ENCODE measurements at regions of chr17 and their contacts with region 1.

Region 1: DNA sequence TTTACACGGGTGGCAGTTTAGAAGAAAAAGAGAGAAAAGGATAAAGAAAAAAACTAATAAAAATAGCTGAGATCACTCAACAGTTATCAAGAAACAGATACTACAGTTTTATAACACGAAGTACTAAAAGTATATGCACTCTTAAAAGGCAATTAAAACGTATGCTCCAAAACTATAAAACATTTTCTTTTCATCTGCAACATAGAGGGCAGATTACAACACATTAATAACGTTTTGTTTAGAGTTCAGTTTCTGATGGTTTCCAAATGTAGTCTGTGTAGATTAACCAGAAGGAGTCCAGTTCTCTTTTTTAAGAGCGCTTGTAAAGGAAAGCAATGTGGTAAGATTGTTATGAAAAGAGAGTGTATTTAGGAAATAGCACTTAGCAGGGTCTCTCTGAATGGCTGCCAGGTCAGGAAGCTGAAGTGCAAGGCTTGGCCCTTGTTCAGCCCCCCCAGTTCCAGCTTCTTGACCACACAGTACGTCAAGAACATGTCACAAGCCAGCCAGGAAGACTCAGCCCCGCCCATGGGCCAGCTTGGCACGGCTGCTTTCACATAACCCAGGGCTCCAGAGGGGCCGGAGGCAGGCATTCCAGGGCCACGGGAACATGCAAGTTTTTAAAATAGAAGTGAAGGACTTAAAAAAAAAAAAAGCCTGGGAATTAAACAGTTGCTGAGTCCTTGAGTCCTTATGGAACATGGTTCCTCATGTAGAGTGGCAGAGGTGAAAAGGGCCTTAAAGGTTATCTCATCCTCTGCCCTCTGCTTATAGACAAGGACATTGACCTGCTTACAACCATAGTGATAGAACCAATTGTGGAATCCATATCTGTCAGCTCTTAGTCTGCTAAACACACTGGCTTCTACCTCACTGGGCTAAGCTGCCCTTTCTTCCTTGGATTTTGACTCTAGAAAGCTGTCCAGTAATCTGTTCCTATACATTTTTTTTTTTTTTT is 147.4 kb upstream of the TBX2 start:
- DNase-seq: peak in 1 of 2 donors; percentile 97
- H3K4me3 ChIP-seq: no peak overlapping the region
- H3K27ac ChIP-seq: peak overlapping the region; percentile 49
- H3K4me1 ChIP-seq: peaks cover 23% of the 10 kb centered on the region
- H3K27me3 ChIP-seq: no peaks in the 10 kb centered on the region
- CTCF ChIP-seq: peak in 1 of 3 experiments; percentile 10
- POLR2A ChIP-seq: no peak

Region 2: DNA sequence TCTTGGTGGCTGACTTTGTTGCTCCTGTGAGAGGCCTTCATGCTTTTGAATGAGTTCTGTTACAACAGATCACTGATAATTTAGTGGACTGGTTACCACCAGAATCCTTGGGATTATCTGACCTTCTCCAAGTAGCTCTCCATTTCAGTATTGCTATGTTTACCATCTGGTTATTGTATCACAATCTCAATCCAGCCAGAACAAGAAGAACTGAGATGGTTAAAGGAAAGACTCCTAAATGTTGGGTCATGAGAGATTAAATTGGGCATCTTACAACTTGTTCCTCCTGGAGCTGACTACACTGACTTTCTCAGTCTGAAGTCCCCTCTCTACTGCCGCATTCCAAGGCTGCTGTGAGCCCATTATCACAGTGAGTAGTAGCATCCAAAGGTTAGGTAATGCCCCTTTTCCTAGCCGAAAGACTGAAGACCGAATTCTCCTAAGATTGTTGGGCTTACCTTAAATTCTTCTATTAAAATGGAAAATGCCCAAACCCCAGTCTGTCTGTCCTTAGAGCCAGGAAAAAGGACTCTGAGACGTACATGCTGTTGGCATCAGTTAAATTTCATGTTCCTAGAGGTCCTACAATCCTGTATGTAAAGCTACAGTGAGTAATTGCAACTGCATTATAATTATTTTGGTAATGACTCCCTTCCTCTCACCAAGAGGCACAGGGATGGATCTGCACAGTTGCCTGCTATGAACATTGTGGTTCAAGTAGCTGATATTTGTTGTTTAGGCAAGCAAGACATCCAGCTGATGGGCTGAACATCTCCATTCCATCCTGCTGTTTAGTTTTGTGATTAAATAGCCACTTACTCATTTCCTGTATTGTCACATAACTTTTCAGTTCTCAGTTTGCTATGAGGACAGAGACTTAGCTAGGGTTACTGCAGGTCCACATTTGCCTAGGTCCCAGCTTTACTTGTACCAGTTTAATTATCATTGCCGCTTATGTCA is 34.1 kb before region 1 on chr17:
- intact Hi-C with region 1: no loop called
- DNase-seq: no peak
- H3K4me3 ChIP-seq: no peak overlapping the region
- H3K27ac ChIP-seq: no peak overlapping the region
- H3K4me1 ChIP-seq: no peaks in the 10 kb centered on the region
- H3K27me3 ChIP-seq: no peaks in the 10 kb centered on the region
- CTCF ChIP-seq: no peak
- POLR2A ChIP-seq: no peak

Region 3: DNA sequence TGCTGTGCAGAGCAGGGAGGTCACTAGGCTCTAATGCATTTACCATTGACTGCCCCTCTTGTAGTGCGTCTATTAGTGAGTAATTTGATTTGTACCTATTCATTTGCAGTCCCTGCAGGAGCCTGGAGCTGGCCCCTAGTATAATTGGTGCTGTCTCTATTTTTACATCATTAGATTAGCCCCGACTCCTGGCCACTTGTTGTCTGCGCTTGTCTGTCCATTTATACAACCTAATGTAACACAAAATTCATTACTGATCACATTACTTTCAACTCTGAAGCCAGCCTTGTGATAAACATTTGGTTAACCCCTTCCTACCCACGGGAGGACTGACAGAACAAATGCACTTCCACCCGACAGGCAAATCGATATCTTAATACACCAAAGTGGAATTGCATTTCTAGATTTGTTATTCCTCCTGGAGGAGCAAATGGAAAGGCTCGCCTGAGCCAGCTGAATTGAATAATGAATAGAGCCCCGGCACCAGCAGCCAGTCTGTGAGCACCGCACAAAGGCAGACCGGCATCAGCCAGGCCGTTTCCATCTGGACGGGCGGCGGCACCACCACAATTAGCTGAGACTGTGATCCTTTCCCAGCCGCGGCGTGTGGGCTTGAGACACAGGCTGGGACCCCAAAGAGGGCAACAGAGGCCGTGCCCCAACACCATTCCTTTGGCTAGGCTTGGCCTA is 128.8 kb after region 1 on chr17:
- intact Hi-C with region 1: no loop called
- DNase-seq: no peak
- H3K4me3 ChIP-seq: no peak overlapping the region
- H3K27ac ChIP-seq: no peak overlapping the region
- H3K4me1 ChIP-seq: no peaks in the 10 kb centered on the region
- H3K27me3 ChIP-seq: no peaks in the 10 kb centered on the region
- CTCF ChIP-seq: no peak
- POLR2A ChIP-seq: no peak

Region 4: GRCh38 chr17:61399131-61400057 is 147.2 kb after region 1 on chr17 and contains the start of gene TBX2:
- intact Hi-C with region 1: loop called (anchors 5 kb)
- DNase-seq: no peak
- H3K4me3 ChIP-seq: peak within 1 kb of the TSS; percentile 49 to 87
- H3K27ac ChIP-seq: peak within 1 kb of the TSS; percentile 83
- H3K4me1 ChIP-seq: peaks cover 55% of the 10 kb centered on the region
- H3K27me3 ChIP-seq: peaks cover 12% of the 10 kb centered on the region
- CTCF ChIP-seq: no peak
- POLR2A ChIP-seq: peak in 1 of 2 donors; percentile 44
- total RNA-seq, gene TBX2: 9.8 TPM